Right cardiac atrium (tissue), 5 donors: ENCODE measurements at regions of chr10 and their contacts with region 1.

Region 1: DNA sequence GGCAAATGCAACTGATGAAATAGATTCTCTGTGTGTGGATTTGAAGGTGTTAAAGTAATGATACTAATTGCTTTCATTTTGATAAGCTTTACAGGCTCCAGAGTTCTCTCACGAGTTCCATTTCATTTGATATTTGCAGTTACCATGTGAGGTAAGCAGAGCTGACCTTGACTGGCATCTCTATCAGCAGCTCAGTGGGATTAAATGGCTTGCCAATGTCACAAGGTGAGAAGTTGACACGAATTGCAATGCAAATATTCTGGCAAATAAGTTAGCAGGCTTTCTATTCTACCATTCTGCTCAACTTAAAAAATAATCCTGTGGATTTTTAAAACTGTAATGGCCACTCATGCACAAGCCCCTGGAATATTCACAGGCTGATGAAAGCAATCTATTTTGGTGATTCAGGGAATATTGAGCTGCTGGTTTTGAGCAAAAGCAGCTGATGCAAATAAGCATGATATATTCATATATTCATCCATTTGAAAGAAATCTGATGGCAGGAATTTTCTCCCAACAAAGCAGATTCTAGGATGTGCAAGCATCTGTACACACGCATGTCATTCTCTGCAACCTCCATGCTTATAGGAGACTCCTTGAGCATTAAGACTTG is 64.5 kb upstream of the ANKRD1 start:
- DNase-seq: no peak
- ATAC-seq: peak in 1 of 2 donors; percentile 37
- H3K4me3 ChIP-seq: no peak overlapping the region
- H3K27ac ChIP-seq: peak overlapping the region; percentile 72
- H3K4me1 ChIP-seq: peaks cover 6% of the 10 kb centered on the region
- H3K27me3 ChIP-seq: no peaks in the 10 kb centered on the region

Region 2: GRCh38 chr10:90674928-90675327 is 310.5 kb before region 1 on chr10:
- intact Hi-C with region 1: no loop called
- DNase-seq: peak in 1 of 3 donors; percentile 34
- ATAC-seq: peak in 1 of 2 donors; percentile 47
- H3K4me3 ChIP-seq: no peak overlapping the region
- H3K27ac ChIP-seq: no peak overlapping the region
- H3K4me1 ChIP-seq: peaks cover 1% of the 10 kb centered on the region
- H3K27me3 ChIP-seq: no peaks in the 10 kb centered on the region

Region 3: DNA sequence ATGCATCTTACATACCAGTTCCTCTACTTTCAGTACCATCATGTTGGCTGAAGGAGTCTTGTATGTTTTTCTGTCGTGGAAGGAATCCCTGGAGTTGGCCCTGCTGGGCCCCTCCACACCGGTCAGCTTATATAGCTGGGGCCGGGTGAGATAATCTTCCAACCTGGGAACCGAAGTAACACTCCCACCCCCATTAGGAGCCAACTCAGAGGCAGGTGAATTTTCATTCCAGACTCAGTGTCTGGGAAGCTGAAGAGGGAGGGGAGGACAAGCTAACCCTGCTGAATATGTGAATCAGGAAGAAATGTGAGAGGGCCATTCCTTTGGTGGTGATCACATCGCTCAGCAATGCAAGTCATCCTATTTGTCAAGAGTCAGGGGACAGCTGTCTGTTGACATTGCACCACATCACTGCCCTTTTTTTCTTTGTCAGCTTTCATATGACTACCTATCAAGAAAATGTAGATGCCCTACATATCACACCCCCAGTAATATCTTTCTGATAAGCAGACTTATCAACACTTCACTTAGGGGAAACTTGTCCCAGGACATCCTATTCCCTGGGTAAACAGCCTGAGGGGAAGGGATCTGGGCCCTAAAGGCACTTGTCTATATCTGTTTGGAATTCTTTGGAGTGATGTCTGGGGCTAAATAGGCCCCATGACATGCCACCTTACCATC is 64.3 kb before region 1 on chr10 and contains the start of gene ANKRD1:
- intact Hi-C with region 1: loop called in 1 of 4 experiments (anchors 5 kb)
- DNase-seq: peak in 2 of 3 donors; percentile 67 to 68
- ATAC-seq: peak; percentile 90 to 91
- H3K4me3 ChIP-seq: peak within 1 kb of the TSS; percentile 36
- H3K27ac ChIP-seq: peak within 1 kb of the TSS; percentile 95
- H3K4me1 ChIP-seq: peaks cover 9% of the 10 kb centered on the region
- H3K27me3 ChIP-seq: no peaks in the 10 kb centered on the region
- total RNA-seq, gene ANKRD1: 1,154 to 3,897 (median 2,224) TPM

Region 4: DNA sequence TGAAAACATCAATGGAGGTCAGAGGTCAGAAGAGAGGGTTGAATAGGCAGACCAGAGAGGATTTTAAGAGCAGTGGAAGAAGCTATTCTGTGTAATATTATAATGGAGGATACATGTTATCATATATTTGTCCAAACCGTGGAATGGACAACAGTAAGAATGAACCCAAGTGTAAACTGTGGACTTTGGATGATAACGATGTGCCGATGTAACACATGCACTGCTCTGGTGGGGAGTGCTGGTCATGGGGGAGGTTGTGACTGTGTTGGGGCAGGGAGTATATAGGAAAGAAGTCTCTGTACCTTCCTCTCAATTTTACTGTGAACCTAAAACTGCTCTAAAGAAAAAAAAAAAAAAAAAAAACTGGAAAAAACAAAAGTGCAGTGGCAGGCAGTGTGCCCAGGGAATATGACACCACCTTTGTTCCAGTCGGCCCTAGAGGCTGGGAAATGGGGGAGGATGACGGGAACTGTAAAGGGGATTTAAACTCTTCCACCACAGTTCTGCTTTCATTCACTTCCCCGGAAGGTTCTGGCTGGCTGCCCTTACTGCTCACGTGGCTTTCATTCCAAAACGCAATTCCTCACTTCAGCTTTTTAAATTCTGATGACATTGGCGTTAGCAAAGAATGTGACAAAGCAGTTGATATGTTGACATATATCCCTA is 49.2 kb after region 1 on chr10:
- intact Hi-C with region 1: no loop called
- DNase-seq: peak; percentile 82 to 89 (median 86)
- ATAC-seq: peak; percentile 78 to 81
- H3K4me3 ChIP-seq: no peak overlapping the region
- H3K27ac ChIP-seq: no peak overlapping the region
- H3K4me1 ChIP-seq: peaks cover 2% of the 10 kb centered on the region
- H3K27me3 ChIP-seq: no peaks in the 10 kb centered on the region

Region 5: GRCh38 chr10:91271886-91272285 is 286.5 kb after region 1 on chr10:
- intact Hi-C with region 1: no loop called
- DNase-seq: no peak
- ATAC-seq: no peak
- H3K4me3 ChIP-seq: no peak overlapping the region
- H3K27ac ChIP-seq: no peak overlapping the region
- H3K4me1 ChIP-seq: no peaks in the 10 kb centered on the region
- H3K27me3 ChIP-seq: no peaks in the 10 kb centered on the region